PC-3 (cell line): ENCODE measurements at regions of chr4 and their contacts with region 1.

Region 1: GRCh38 chr4:38160487-38161207 is 200.4 kb downstream of the PTTG2 start:
- DNase-seq: peak; percentile 76
- ATAC-seq: peak; percentile 35; the same call in 1 of the 2 replicates
- H3K4me3 ChIP-seq: no peak overlapping the region
- H3K27ac ChIP-seq: peak overlapping the region; percentile 96
- H3K4me1 ChIP-seq: peaks cover 40% of the 10 kb centered on the region
- H3K27me3 ChIP-seq: no peaks in the 10 kb centered on the region
- CTCF ChIP-seq: no peak

Region 2: DNA sequence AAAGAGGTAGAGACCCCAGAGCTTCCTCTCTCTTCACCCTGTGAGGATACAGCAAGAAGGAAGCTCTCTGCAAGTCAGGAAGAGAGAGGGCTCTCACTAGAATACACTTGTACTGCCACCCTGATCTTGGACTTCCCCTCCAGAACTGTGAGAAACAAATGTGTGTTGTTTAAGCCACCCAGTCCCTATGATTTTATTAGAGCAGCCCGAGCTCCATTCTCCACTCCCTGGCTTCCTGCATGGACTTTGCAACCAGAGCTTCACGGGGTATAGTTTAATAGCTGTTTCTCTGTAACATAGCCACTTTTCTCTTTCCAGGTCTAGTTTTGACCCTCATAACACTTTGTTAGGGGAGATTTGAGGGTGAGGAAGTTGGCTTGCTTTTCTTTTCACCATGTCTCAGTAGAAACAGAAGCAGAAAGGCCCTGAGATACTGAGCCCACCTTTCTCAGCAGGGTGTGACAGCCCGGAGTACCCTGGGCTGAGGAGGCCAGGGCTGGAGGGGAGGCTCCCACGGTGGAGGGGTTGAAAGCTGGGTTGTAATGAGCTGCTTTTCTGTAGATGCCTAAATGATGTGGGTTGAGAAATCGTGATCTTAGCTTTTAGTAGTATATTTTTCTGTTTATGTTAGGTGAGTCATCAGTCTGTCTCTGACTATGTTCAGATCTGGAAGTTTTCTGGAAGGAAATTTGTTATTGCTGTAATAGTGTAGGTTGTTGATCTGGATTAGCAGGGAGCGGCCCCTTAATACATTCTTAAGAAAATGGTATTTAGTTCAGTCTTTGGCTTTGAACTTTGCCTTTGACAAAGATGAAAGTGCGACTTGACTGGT is 81.8 kb before region 1 on chr4:
- CTCF ChIA-PET with region 1: no interaction called
- POLR2A ChIA-PET with region 1: no interaction called
- intact Hi-C with region 1: loop called (anchors 5 kb)
- DNase-seq: peak; percentile 59
- ATAC-seq: peak; percentile 89
- H3K4me3 ChIP-seq: no peak overlapping the region
- H3K27ac ChIP-seq: peak overlapping the region; percentile 76
- H3K4me1 ChIP-seq: peaks cover 27% of the 10 kb centered on the region
- H3K27me3 ChIP-seq: no peaks in the 10 kb centered on the region
- CTCF ChIP-seq: no peak

Region 3: GRCh38 chr4:38141808-38142500 is 18.7 kb before region 1 on chr4:
- CTCF ChIA-PET with region 1: no interaction called
- POLR2A ChIA-PET with region 1: no interaction called
- intact Hi-C with region 1: no loop called
- DNase-seq: peak; percentile 8
- ATAC-seq: peak; percentile 51
- H3K4me3 ChIP-seq: no peak overlapping the region
- H3K27ac ChIP-seq: no peak overlapping the region
- H3K4me1 ChIP-seq: no peaks in the 10 kb centered on the region
- H3K27me3 ChIP-seq: no peaks in the 10 kb centered on the region
- CTCF ChIP-seq: no peak

Region 4: GRCh38 chr4:38172078-38172477 is 11.4 kb after region 1 on chr4:
- CTCF ChIA-PET with region 1: interaction called, 12 read pairs
- POLR2A ChIA-PET with region 1: no interaction called
- intact Hi-C with region 1: no loop called
- DNase-seq: no peak
- ATAC-seq: no peak
- H3K4me3 ChIP-seq: no peak overlapping the region
- H3K27ac ChIP-seq: no peak overlapping the region
- H3K4me1 ChIP-seq: peaks cover 11% of the 10 kb centered on the region; the same call in 1 of the 2 replicates
- H3K27me3 ChIP-seq: no peaks in the 10 kb centered on the region
- CTCF ChIP-seq: no peak

Region 5: GRCh38 chr4:38190717-38191178 is 30.1 kb after region 1 on chr4:
- CTCF ChIA-PET with region 1: no interaction called
- POLR2A ChIA-PET with region 1: no interaction called
- intact Hi-C with region 1: no loop called
- DNase-seq: peak; percentile 53
- ATAC-seq: no peak
- H3K4me3 ChIP-seq: no peak overlapping the region
- H3K27ac ChIP-seq: peak overlapping the region; percentile 100
- H3K4me1 ChIP-seq: peaks cover 28% of the 10 kb centered on the region
- H3K27me3 ChIP-seq: no peaks in the 10 kb centered on the region
- CTCF ChIP-seq: no peak

Region 6: DNA sequence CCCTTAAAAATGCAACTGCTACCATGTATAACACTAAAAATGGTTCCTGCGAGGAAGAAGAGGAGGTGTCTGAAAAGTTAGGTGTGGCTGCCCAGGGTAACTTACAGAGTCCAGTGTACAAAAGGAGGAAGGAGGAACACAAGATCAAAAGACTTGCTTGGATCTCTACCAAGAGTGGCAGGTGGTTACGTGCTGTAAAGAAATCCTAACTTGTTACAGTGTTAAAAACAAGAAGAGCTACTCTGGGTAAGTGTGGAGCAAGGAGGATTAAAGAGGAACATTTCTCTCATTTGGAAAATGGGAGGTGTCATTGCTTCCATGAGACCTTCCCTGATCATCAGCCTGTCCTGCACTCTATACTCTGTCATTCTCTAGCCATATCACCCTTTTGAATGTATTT is 41.6 kb after region 1 on chr4:
- CTCF ChIA-PET with region 1: no interaction called
- POLR2A ChIA-PET with region 1: no interaction called
- intact Hi-C with region 1: no loop called
- DNase-seq: no peak
- ATAC-seq: no peak
- H3K4me3 ChIP-seq: no peak overlapping the region
- H3K27ac ChIP-seq: no peak overlapping the region
- H3K4me1 ChIP-seq: no peaks in the 10 kb centered on the region
- H3K27me3 ChIP-seq: no peaks in the 10 kb centered on the region
- CTCF ChIP-seq: no peak